ENCODE measurements at regions of chr10 and their contacts with region 1.

Region 1: GRCh38 chr10:117442944-117443685 is 67.9 kb upstream of the PDZD8 start:
- DNase-seq: peak; percentile 16
- ATAC-seq: peak; percentile 90
- H3K4me3 ChIP-seq: no peak overlapping the region
- H3K27ac ChIP-seq: no peak overlapping the region
- H3K4me1 ChIP-seq: 0 out of 2 replicates have a peak, but pooled peaks cover 5% of the 10 kb centered on the region
- H3K27me3 ChIP-seq: no peaks in the 10 kb centered on the region; a peak in 1 of 4 replicates
- CTCF ChIP-seq: peak; percentile 70 to 80 (median 79)
- EP300 ChIP-seq: no peak
- POLR2A ChIP-seq: no peak
- RAD21 ChIP-seq: peak; percentile 35

Region 2: DNA sequence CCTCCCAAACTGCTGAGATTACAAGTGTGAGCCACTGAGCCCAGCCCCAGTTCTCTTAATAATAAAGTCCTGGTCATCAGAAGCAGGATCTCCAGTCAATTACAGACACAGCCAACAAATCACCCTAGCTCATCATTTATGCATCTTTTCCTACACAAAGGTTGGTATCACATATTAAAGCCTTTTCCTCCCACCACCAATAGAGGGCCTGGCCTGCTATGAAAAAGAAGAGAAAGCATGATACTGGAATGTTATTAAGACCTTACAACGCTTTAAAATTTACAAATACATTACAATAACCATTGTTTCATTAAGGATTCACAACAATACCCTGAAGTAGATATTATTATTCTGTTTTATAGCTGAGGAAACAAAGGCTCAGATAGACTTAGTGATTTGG is 330.9 kb before region 1 on chr10:
- CTCF ChIA-PET with region 1: no interaction called
- POLR2A ChIA-PET with region 1: no interaction called
- RAD21 ChIA-PET with region 1: no interaction called
- SMC1A ChIA-PET with region 1: no interaction called
- in situ Hi-C with region 1: no loop called
- intact Hi-C with region 1: no loop called
- DNase-seq: no peak
- ATAC-seq: no peak
- H3K4me3 ChIP-seq: no peak overlapping the region
- H3K27ac ChIP-seq: no peak overlapping the region
- H3K4me1 ChIP-seq: no peaks in the 10 kb centered on the region
- H3K27me3 ChIP-seq: no peaks in the 10 kb centered on the region
- CTCF ChIP-seq: peak in 1 of 3 experiments; percentile 14; a peak in 1 of 6 replicates
- EP300 ChIP-seq: no peak
- POLR2A ChIP-seq: no peak
- RAD21 ChIP-seq: no peak

Region 3: GRCh38 chr10:117431160-117431559 is 12.0 kb before region 1 on chr10:
- CTCF ChIA-PET with region 1: interaction called, 65 read pairs
- POLR2A ChIA-PET with region 1: interaction called, 6 read pairs
- RAD21 ChIA-PET with region 1: interaction called, 15 read pairs
- SMC1A ChIA-PET with region 1: interaction called, 19 read pairs
- in situ Hi-C with region 1: no loop called
- intact Hi-C with region 1: no loop called
- DNase-seq: no peak
- ATAC-seq: peak; percentile 41; the same call in 2 of the 3 replicates
- H3K4me3 ChIP-seq: no peak overlapping the region
- H3K27ac ChIP-seq: no peak overlapping the region
- H3K4me1 ChIP-seq: no peaks in the 10 kb centered on the region
- H3K27me3 ChIP-seq: peaks cover 0 to 2% of the 10 kb centered on the region in 2 experiments; a peak in 2 of 4 replicates
- CTCF ChIP-seq: peak in 1 of 3 experiments; percentile 25; a peak in 1 of 6 replicates
- EP300 ChIP-seq: no peak
- POLR2A ChIP-seq: no peak
- RAD21 ChIP-seq: no peak

Region 4: GRCh38 chr10:117457071-117457810 is 14.1 kb after region 1 on chr10:
- CTCF ChIA-PET with region 1: interaction called, 31 read pairs
- POLR2A ChIA-PET with region 1: no interaction called
- RAD21 ChIA-PET with region 1: interaction called, 7 read pairs
- SMC1A ChIA-PET with region 1: interaction called, 8 read pairs
- in situ Hi-C with region 1: no loop called
- intact Hi-C with region 1: no loop called
- DNase-seq: no peak
- ATAC-seq: peak; percentile 66
- H3K4me3 ChIP-seq: no peak overlapping the region
- H3K27ac ChIP-seq: no peak overlapping the region
- H3K4me1 ChIP-seq: no peaks in the 10 kb centered on the region
- H3K27me3 ChIP-seq: no peaks in the 10 kb centered on the region
- CTCF ChIP-seq: no peak
- EP300 ChIP-seq: no peak
- POLR2A ChIP-seq: no peak
- RAD21 ChIP-seq: no peak

Region 5: DNA sequence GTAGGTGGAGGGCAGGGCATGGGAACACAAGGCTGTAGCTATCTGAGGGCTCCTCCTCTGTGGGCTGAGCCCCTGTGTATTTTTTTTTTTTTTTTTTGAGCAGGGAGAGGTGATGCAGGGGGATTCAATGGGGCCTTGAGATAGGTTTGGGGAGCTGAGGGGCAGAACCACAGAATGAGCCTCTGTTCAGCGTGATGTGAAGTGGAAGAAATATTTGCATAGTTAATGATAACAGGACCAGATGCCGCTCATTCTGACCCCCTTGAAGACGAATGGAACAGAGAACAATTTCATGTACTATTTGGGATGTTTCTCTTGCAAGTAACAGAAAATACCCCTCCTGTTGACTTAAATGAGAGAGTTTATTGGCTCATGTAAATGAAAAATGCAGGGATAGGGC is 29.8 kb after region 1 on chr10:
- CTCF ChIA-PET with region 1: interaction called, 25 read pairs
- POLR2A ChIA-PET with region 1: no interaction called
- RAD21 ChIA-PET with region 1: interaction called, 19 read pairs
- SMC1A ChIA-PET with region 1: interaction called, 10 read pairs
- in situ Hi-C with region 1: no loop called
- intact Hi-C with region 1: no loop called
- DNase-seq: no peak
- ATAC-seq: peak; percentile 77
- H3K4me3 ChIP-seq: no peak overlapping the region
- H3K27ac ChIP-seq: no peak overlapping the region
- H3K4me1 ChIP-seq: no peaks in the 10 kb centered on the region
- H3K27me3 ChIP-seq: no peaks in the 10 kb centered on the region; a peak in 1 of 4 replicates
- CTCF ChIP-seq: no peak
- EP300 ChIP-seq: no peak
- POLR2A ChIP-seq: no peak
- RAD21 ChIP-seq: no peak

Region 6: GRCh38 chr10:117477961-117478670 is 35.0 kb after region 1 on chr10:
- CTCF ChIA-PET with region 1: interaction called, 25 read pairs
- POLR2A ChIA-PET with region 1: no interaction called
- RAD21 ChIA-PET with region 1: interaction called, 19 read pairs
- SMC1A ChIA-PET with region 1: interaction called, 11 read pairs
- in situ Hi-C with region 1: no loop called
- intact Hi-C with region 1: no loop called
- DNase-seq: no peak
- ATAC-seq: 0 out of 3 replicates have a peak, but pooled peaks have one; percentile 7
- H3K4me3 ChIP-seq: no peak overlapping the region
- H3K27ac ChIP-seq: no peak overlapping the region
- H3K4me1 ChIP-seq: 0 out of 2 replicates have a peak, but pooled peaks cover 4% of the 10 kb centered on the region
- H3K27me3 ChIP-seq: no peaks in the 10 kb centered on the region; a peak in 1 of 4 replicates
- CTCF ChIP-seq: peak in 2 of 3 experiments; percentile 8 to 10; a peak in 1 of 6 replicates
- EP300 ChIP-seq: no peak
- POLR2A ChIP-seq: no peak
- RAD21 ChIP-seq: no peak